ENCODE measurements at regions of chr12 and their contacts with region 1.

Region 1: DNA sequence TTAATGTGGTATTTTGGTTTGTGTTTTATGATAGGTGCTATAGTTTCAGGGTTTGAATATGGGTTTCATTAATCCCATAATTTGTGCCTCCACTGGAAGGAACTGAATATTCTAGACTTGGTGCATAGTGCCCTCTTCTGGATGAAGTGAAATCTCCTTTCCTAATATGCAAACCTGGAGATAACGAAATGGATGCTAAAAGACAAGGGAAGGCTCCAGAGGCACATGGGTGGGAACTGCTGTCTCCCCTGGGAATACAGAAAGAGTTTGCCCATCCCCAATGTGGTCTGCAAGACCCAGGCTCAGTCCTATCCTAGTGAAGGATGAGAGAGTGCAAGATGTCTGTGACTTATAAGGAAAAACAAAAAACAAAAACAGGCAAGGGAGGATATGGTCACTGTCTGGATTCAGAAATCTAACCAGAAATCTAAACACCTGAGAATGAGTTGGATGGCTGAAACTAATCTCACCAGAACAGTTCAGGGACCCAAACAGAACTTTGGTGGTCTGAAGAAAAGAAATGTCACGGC is 142.3 kb upstream of the TMPO start:
- DNase-seq: peak; percentile 73
- H3K4me3 ChIP-seq: no peak overlapping the region
- H3K27ac ChIP-seq: no peak overlapping the region
- H3K4me1 ChIP-seq: peaks cover 21% of the 10 kb centered on the region
- CTCF ChIP-seq: peak; percentile 95

Region 2: GRCh38 chr12:97283297-97283696 is 1089.8 kb before region 1 on chr12:
- CTCF ChIA-PET with region 1: no interaction called
- POLR2A ChIA-PET with region 1: no interaction called
- intact Hi-C with region 1: loop called (anchors 10 kb)
- DNase-seq: peak; percentile 39
- H3K4me3 ChIP-seq: no peak overlapping the region
- H3K27ac ChIP-seq: no peak overlapping the region
- H3K4me1 ChIP-seq: no peaks in the 10 kb centered on the region
- CTCF ChIP-seq: peak; percentile 74

Region 3: GRCh38 chr12:97960754-97961608 is 412.1 kb before region 1 on chr12:
- CTCF ChIA-PET with region 1: no interaction called
- POLR2A ChIA-PET with region 1: interaction called, 4 read pairs
- intact Hi-C with region 1: loop called (anchors 1 kb)
- DNase-seq: peak; percentile 55
- H3K4me3 ChIP-seq: no peak overlapping the region
- H3K27ac ChIP-seq: no peak overlapping the region
- H3K4me1 ChIP-seq: no peaks in the 10 kb centered on the region
- CTCF ChIP-seq: peak; percentile 90

Region 4: DNA sequence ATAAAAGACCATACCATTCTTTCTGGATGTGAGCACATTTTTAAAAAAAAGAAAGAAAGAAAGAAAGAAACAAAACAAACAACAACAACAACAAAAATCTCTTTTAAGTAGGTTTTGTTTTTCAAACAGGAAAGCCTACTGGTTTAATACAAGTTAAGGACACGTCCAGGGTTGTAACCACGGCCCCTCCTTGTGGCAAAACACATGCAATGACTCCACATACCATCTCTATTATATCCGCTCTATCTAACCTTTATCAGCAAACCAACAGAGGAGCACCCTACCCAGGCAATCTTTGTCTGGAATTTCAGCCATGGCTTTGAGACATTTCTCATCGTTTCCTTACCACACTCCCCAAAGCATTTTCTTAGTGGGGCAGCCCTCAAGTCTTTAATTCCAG is 218.2 kb before region 1 on chr12:
- CTCF ChIA-PET with region 1: no interaction called
- POLR2A ChIA-PET with region 1: interaction called, 3 read pairs
- intact Hi-C with region 1: loop called (anchors 5 kb)
- DNase-seq: peak; percentile 53
- H3K4me3 ChIP-seq: no peak overlapping the region
- H3K27ac ChIP-seq: no peak overlapping the region
- H3K4me1 ChIP-seq: peaks cover 24% of the 10 kb centered on the region
- CTCF ChIP-seq: peak; percentile 70

Region 5: GRCh38 chr12:98397316-98398105 is 24.4 kb after region 1 on chr12:
- CTCF ChIA-PET with region 1: no interaction called
- POLR2A ChIA-PET with region 1: interaction called, 4 read pairs
- intact Hi-C with region 1: loop called (anchors 2 kb)
- DNase-seq: peak; percentile 89
- H3K4me3 ChIP-seq: peak overlapping the region; percentile 62
- H3K27ac ChIP-seq: peak overlapping the region; percentile 31
- H3K4me1 ChIP-seq: peaks cover 50% of the 10 kb centered on the region
- CTCF ChIP-seq: peak; percentile 92